HCT116 (cell line): ENCODE measurements at regions of chr9 and their contacts with region 1.

Region 1: DNA sequence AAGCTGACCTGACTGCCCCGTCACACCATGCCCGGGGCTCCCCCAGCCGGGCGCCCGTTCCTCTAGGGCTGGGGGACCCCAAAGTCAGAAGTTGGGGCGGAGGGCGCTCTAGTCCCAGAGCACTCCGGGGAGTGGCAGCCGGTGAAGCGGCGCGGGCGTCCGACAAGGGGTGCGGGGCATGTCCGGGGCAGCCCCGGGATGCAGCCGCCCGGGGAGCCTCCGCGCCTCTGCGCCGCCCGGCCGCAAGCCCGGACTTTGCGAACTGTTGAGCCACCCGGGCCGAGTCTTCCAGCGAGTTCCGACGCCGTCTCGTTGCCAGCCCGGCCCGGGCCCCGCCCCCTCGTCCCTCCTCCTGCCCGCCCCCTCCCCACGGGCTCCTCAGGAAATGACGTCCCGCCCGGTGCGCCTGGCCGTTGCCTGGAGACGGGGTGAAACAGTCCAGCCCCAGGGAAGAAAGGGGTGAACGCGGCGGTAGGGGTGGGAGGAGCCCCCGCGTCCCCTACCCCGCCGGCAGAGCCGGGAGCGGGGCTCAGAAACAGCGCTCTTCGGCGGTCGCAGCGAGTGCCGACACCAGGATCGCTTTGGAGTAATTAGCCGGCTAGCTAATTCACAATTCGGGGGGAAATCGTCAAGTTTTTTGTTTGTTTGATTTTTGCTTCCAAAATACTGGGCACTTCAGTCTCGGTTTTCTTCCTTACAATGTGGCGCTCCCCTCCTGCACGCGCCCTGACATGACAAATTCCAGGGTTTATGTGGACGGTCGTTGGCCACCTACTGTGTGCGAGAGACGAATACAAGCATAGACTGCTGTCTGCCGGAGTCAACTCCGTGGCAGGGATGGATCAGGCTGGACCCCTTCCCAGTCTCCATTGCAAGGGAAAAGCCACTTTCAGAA is at the start of gene WHRN:
- DNase-seq: peak; percentile 60
- ATAC-seq: peak; percentile 78
- H3K4me3 ChIP-seq: peak within 1 kb of the TSS; percentile 48 to 63
- H3K27ac ChIP-seq: peak within 1 kb of the TSS; percentile 34; the same call in 1 of the 2 replicates
- H3K4me1 ChIP-seq: peaks cover 4 to 37% of the 10 kb centered on the region in 2 experiments; a peak in 3 of 4 replicates
- H3K27me3 ChIP-seq: peaks cover 23% of the 10 kb centered on the region
- CTCF ChIP-seq: no peak
- POLR2A ChIP-seq: no peak
- RAD21 ChIP-seq: no peak
- total RNA-seq, gene WHRN: 12.8 TPM

Region 2: DNA sequence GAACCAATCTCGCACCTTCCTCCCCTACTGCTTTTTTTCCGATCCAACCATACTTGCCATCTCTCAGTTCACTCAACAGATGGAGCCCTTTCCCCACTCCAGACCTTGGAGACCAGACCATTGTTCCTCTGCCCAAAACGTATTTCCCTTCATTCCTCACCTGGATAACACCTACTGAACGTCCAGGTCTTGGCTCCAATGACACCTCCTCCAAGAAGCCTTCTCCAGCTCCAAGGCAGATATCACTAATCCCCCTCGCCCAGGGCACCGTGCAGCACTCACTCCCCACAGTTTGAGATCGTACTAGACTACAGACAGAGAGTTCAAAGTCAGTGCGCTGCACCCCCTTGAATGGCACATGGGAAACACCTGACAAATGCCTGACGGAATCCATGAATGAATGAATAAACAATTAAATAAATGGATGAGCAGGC is 70.5 kb before region 1 on chr9:
- CTCF ChIA-PET with region 1: interaction called, 5 read pairs
- POLR2A ChIA-PET with region 1: no interaction called
- RAD21 ChIA-PET with region 1: no interaction called
- intact Hi-C with region 1: loop called (anchors 1 kb)
- DNase-seq: peak; percentile 35
- ATAC-seq: peak; percentile 93
- H3K4me3 ChIP-seq: no peak overlapping the region
- H3K27ac ChIP-seq: no peak overlapping the region
- H3K4me1 ChIP-seq: no peaks in the 10 kb centered on the region
- H3K27me3 ChIP-seq: no peaks in the 10 kb centered on the region
- CTCF ChIP-seq: peak; percentile 62 to 79 (median 70)
- POLR2A ChIP-seq: no peak
- RAD21 ChIP-seq: peak; percentile 88

Region 3: DNA sequence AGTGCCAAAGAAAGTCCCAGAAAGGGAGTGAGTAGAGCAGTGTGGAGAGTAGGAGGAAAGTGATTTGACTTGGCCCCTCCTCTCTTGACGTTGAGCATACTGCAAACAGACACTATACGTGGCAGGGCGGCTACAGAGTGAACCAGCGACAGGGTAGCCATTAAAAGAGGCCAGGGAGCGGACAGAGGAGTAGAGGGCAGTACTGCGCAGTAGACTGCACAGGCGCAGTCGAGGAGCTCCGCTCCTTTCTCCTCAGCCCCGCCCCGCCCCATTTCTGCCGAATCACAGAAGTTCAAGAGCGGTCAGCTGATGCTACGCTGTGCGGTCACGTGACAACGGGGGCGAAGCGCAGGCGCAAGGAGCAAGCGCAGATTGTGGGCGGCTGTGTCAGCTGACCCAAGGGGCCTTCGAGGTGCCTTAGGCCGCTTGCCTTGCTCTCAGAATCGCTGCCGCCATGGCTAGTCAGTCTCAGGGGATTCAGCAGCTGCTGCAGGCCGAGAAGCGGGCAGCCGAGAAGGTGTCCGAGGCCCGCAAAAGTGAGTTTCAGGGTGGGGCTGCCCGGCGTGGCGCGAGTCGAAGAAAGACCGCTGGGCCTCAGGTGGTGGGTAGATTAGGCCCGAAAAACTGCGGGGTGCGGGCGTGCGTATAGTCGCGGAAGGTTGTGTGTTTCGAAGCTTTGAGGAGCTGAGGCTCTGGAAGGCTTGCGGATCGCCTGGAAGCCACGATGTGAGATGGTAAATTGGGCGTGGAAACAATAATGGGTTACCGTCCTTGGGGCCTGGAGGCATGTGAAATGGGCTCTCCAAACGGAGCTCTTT is 82.2 kb after region 1 on chr9 and contains the start of gene ATP6V1G1:
- CTCF ChIA-PET with region 1: no interaction called
- POLR2A ChIA-PET with region 1: interaction called, 3 read pairs
- RAD21 ChIA-PET with region 1: no interaction called
- intact Hi-C with region 1: loop called (anchors 5 kb)
- DNase-seq: peak; percentile 98
- ATAC-seq: peak; percentile 98
- H3K4me3 ChIP-seq: peak within 1 kb of the TSS; percentile 95 to 100
- H3K27ac ChIP-seq: peak within 1 kb of the TSS; percentile 65
- H3K4me1 ChIP-seq: peaks cover 10 to 19% of the 10 kb centered on the region in 2 experiments
- H3K27me3 ChIP-seq: no peaks in the 10 kb centered on the region
- CTCF ChIP-seq: 0 out of 6 replicates have a peak, but pooled peaks of 1 of the 3 experiments have one; percentile 9
- POLR2A ChIP-seq: peak; percentile 96
- RAD21 ChIP-seq: no peak
- total RNA-seq, gene ATP6V1G1: 72.3 TPM

Region 4: GRCh38 chr9:114799441-114799840 is 294.0 kb after region 1 on chr9:
- CTCF ChIA-PET with region 1: no interaction called
- POLR2A ChIA-PET with region 1: no interaction called
- RAD21 ChIA-PET with region 1: no interaction called
- intact Hi-C with region 1: no loop called
- DNase-seq: no peak
- ATAC-seq: no peak
- H3K4me3 ChIP-seq: no peak overlapping the region
- H3K27ac ChIP-seq: no peak overlapping the region
- H3K4me1 ChIP-seq: peaks cover 8 to 12% of the 10 kb centered on the region in 2 experiments
- H3K27me3 ChIP-seq: no peaks in the 10 kb centered on the region; the same call in 1 of the 2 replicates
- CTCF ChIP-seq: no peak
- POLR2A ChIP-seq: no peak
- RAD21 ChIP-seq: no peak

Region 5: DNA sequence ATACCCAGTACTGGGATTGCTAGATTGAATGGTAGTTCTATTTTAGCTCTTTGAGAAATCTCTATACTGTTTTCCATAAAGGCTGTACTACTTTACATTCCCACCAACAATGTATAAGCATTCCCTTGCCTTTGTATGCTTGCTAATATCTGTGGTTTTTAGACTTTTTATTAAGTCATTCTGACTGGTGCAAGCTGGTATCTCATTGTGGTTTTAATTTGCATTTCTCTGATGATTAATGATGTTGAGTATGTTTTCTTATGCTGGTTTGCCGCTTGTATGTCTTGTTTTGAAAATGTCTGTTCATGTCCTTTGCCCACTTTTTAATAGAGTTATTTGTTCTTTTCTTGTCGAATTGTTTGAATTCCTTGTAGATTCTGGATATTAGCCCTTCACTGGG is 1135.5 kb after region 1 on chr9:
- CTCF ChIA-PET with region 1: no interaction called
- POLR2A ChIA-PET with region 1: no interaction called
- RAD21 ChIA-PET with region 1: no interaction called
- intact Hi-C with region 1: no loop called
- DNase-seq: no peak
- ATAC-seq: no peak
- H3K4me3 ChIP-seq: no peak overlapping the region
- H3K27ac ChIP-seq: no peak overlapping the region
- H3K4me1 ChIP-seq: no peaks in the 10 kb centered on the region
- H3K27me3 ChIP-seq: peaks cover 34% of the 10 kb centered on the region
- CTCF ChIP-seq: no peak
- POLR2A ChIP-seq: no peak
- RAD21 ChIP-seq: no peak